PC-9 (cell line): ENCODE measurements at regions of chr18 and their contacts with region 1.

Region 1: GRCh38 chr18:50961974-50962373 is 5.9 kb upstream of the ELAC1 start:
- DNase-seq: no peak
- H3K4me3 ChIP-seq: no peak overlapping the region
- H3K27ac ChIP-seq: no peak overlapping the region
- H3K4me1 ChIP-seq: no peaks in the 10 kb centered on the region
- H3K27me3 ChIP-seq: no peaks in the 10 kb centered on the region
- CTCF ChIP-seq: no peak

Region 2: GRCh38 chr18:49368876-49369440 is 1593.0 kb before region 1 on chr18:
- CTCF ChIA-PET with region 1: interaction called, 12 read pairs
- POLR2A ChIA-PET with region 1: no interaction called
- intact Hi-C with region 1: no loop called
- DNase-seq: no peak
- H3K4me3 ChIP-seq: no peak overlapping the region
- H3K27ac ChIP-seq: no peak overlapping the region
- H3K4me1 ChIP-seq: no peaks in the 10 kb centered on the region
- H3K27me3 ChIP-seq: no peaks in the 10 kb centered on the region
- CTCF ChIP-seq: no peak

Region 3: GRCh38 chr18:51053814-51054213 is 91.8 kb after region 1 on chr18:
- CTCF ChIA-PET with region 1: no interaction called
- POLR2A ChIA-PET with region 1: no interaction called
- intact Hi-C with region 1: no loop called
- DNase-seq: no peak
- H3K4me3 ChIP-seq: no peak overlapping the region
- H3K27ac ChIP-seq: no peak overlapping the region
- H3K4me1 ChIP-seq: no peaks in the 10 kb centered on the region
- H3K27me3 ChIP-seq: no peaks in the 10 kb centered on the region
- CTCF ChIP-seq: no peak